ENCODE measurements at regions of chr2 and their contacts with region 1.

Region 1: DNA sequence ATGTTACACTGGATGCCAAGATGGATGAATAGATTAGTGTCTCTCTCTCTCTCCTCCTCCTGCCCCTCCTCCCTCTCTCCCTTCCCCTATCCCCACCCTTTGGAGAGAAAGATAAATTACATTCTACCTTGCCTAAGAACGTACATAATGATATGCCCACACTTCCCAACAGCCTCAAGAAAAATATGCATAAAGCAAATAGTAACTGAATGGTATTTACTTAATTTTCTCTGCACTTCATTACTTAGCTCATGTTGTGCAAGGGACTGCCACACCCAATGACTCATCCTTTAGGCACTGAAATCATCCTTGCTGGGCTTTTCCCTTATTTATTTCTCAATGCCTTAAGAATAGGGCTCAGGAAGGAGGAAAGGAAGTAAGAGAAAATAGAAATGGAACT is 137.3 kb upstream of the PID1 start:
- DNase-seq: peak; percentile 97
- H3K4me3 ChIP-seq: no peak overlapping the region
- H3K27ac ChIP-seq: peak overlapping the region; percentile 98
- H3K4me1 ChIP-seq: peaks cover 24% of the 10 kb centered on the region
- H3K27me3 ChIP-seq: no peaks in the 10 kb centered on the region
- CTCF ChIP-seq: no peak

Region 2: GRCh38 chr2:229363185-229363814 is 45.1 kb before region 1 on chr2:
- CTCF ChIA-PET with region 1: no interaction called
- dilution Hi-C with region 1: no loop called
- in situ Hi-C with region 1: no loop called
- intact Hi-C with region 1: loop called (anchors 5 kb)
- DNase-seq: peak; percentile 78
- H3K4me3 ChIP-seq: no peak overlapping the region
- H3K27ac ChIP-seq: peak overlapping the region; percentile 71
- H3K4me1 ChIP-seq: peaks cover 30% of the 10 kb centered on the region
- H3K27me3 ChIP-seq: no peaks in the 10 kb centered on the region
- CTCF ChIP-seq: no peak

Region 3: GRCh38 chr2:229454934-229455631 is 46.7 kb after region 1 on chr2:
- CTCF ChIA-PET with region 1: no interaction called
- dilution Hi-C with region 1: no loop called
- in situ Hi-C with region 1: no loop called
- intact Hi-C with region 1: loop called (anchors 5 kb)
- DNase-seq: peak; percentile 81
- H3K4me3 ChIP-seq: no peak overlapping the region
- H3K27ac ChIP-seq: peak overlapping the region; percentile 74
- H3K4me1 ChIP-seq: peaks cover 17% of the 10 kb centered on the region
- H3K27me3 ChIP-seq: no peaks in the 10 kb centered on the region
- CTCF ChIP-seq: no peak